ENCODE measurements at regions of chr18 and their contacts with region 1.

Region 1: GRCh38 chr18:74836296-74837139 is 238.8 kb downstream of the ZNF407 start:
- DNase-seq: no peak
- H3K4me3 ChIP-seq: no peak overlapping the region
- H3K27ac ChIP-seq: no peak overlapping the region
- H3K4me1 ChIP-seq: no peaks in the 10 kb centered on the region
- H3K27me3 ChIP-seq: no peaks in the 10 kb centered on the region
- CTCF ChIP-seq: no peak
- POLR2A ChIP-seq: no peak

Region 2: DNA sequence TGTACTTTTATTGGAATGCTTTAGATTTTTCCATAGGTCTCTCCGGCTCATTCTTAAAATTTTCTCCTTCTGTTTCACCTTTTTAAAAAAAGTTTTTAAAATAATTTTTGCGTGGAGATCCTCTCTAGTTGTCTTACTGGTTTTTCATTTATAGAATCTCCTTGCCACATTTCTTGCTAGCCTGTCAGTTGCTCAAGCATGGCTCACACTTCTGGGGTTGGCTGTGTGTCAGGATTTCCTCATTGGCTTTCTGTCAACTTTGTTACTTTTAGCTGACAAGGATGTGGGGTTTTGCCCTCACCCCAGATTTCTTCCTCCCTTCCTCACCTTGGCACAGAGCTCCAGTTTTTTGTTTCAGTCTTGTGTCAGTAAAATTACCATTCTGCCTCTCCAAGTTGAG is 114.3 kb before region 1 on chr18:
- intact Hi-C with region 1: no loop called
- DNase-seq: no peak
- H3K4me3 ChIP-seq: no peak overlapping the region
- H3K27ac ChIP-seq: no peak overlapping the region
- H3K4me1 ChIP-seq: no peaks in the 10 kb centered on the region
- H3K27me3 ChIP-seq: no peaks in the 10 kb centered on the region
- CTCF ChIP-seq: no peak
- POLR2A ChIP-seq: no peak

Region 3: DNA sequence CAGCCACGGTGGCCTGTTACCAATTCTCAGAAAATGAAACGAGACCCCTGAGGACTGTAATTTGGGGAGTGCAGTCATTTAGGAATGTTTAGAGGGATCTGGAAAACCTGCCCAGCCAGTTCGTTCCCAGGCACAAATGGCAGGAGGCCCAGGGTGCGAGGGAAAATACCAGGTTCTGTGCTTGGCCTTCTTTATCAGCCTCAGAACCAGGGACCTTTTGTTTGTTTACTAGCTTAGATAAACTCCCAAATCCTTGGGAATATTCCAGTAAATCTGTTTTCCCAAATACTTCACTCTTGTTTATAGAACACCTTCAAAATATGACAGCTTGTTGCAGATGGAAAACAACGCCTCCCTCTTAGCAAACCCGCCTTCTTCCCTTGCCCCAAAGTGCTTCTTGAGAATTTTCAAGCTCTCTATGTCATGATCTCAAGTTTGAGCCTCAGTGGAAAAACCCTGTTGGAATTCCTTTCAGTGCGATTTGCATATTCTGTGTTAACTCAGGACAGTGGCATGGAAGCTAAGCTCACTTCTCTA is 991.3 kb after region 1 on chr18:
- intact Hi-C with region 1: loop called (anchors 10 kb)
- DNase-seq: no peak
- H3K4me3 ChIP-seq: no peak overlapping the region
- H3K27ac ChIP-seq: peak overlapping the region in 1 of 2 donors; percentile 7
- H3K4me1 ChIP-seq: no peaks in the 10 kb centered on the region
- H3K27me3 ChIP-seq: no peaks in the 10 kb centered on the region
- CTCF ChIP-seq: no peak
- POLR2A ChIP-seq: no peak

Measured in breast epithelium (tissue), 4 donors.